ENCODE measurements at regions of chr5 and their contacts with region 1.

Region 1: GRCh38 chr5:75744355-75744754 is 27.1 kb upstream of the POC5 start:
- DNase-seq: no peak
- ATAC-seq: no peak

Region 2: DNA sequence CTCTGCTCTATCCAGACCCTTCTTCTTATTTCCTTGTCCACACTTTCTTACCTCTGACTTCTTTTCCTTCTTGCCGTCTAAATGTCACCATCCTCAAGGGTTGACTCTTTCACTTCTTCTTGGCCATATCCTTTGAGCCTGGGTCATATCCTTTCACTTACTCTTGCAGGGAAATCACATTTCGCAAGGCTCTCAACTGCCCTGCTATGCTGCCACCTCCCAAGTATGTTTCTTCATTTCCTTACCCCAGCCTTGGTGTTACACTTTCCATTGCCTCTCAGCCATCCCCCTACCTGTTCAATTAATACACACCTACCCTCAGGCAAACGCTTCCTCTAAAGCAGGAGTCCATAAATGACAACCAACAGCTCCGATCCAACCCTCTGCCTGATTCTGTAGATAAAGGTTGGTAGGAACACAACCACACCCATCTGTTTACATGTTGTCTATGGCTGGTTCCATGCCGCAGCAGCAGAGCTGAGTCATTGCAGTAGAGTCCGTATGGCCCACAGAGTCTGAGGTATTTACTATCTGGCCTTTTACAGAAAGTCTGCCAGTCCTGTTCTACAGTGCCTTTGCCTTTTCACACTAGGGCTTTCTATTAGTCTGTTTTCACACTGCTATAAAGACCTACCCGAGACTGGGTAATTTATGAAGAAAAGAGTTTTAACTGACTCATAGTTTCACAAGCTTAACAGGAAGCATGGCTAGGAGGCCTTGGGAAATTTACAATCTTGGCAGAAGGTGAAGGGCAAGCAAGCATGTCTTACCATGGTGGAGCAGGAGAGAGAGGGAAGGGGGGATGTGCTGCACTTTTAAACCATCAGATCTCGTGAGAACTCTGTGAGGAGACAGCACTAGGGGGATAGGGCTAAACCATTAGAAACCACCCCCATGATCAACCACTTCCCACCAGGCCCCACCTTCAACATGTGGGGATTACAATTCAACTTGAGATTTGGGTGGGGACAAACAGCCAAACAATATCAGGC is 436.8 kb after region 1 on chr5:
- intact Hi-C with region 1: loop called (anchors 10 kb)
- DNase-seq: no peak
- ATAC-seq: peak; percentile 36